MCF 10A (cell line): ENCODE measurements at regions of chr11 and their contacts with region 1.

Region 1: DNA sequence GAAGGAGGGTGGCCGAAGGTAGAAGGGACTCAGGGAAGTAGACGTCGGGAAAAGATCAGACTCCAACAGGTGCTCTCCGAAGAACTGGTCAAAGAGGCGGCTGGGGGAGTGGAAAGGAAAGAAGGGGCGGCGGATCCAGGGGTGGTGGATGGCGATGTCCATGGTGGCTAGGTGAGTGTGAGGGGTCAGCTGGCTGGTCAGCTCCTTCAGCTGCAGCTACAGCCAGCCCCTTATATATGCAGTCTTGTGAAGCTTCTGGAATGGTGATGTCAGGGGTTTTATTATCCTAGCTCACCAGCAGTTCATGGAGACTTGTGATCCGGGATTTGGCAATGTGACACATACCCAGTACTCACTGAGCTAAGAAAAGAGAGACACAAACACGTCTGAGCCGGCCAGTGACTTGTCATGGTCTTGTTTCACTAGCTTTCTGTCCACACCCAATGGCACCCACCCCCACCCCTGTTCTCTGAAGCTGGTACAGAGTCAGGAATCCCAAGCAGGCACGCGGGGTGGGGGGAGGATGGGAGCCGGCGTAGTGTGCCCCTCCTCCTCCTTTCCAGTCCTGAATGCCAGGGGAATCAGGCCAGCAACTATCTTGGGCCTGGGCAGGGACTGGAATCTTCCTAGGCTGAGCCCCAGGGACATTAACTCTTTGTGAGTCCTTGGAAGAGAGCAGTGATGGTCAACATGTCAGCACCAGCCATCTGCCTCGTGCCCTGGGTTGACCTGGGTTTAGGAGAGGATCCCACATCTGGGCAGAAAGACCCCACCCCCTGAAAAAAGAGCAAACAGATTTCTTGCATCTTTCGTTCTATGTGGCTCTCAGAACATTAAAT is at the start of gene CRYAB:
- DNase-seq: peak; percentile 61
- H3K4me3 Mint-ChIP-seq: peak within 1 kb of the TSS; percentile 41
- H3K27ac Mint-ChIP-seq: peak within 1 kb of the TSS; percentile 86
- H3K4me1 Mint-ChIP-seq: peaks cover 18% of the 10 kb centered on the region
- H3K27me3 Mint-ChIP-seq: no peaks in the 10 kb centered on the region
- CTCF ChIP-seq: no peak
- total RNA-seq, gene CRYAB: 1.2 and 2.5 TPM in 2 replicates

Region 2: GRCh38 chr11:111886844-111887243 is 24.9 kb before region 1 on chr11:
- CTCF ChIA-PET with region 1: interaction called, 6 read pairs
- POLR2A ChIA-PET with region 1: interaction called, 41 read pairs
- intact Hi-C with region 1: no loop called
- DNase-seq: no peak
- H3K4me3 Mint-ChIP-seq: no peak overlapping the region
- H3K27ac Mint-ChIP-seq: no peak overlapping the region
- H3K4me1 Mint-ChIP-seq: no peaks in the 10 kb centered on the region
- H3K27me3 Mint-ChIP-seq: no peaks in the 10 kb centered on the region
- CTCF ChIP-seq: no peak

Region 3: DNA sequence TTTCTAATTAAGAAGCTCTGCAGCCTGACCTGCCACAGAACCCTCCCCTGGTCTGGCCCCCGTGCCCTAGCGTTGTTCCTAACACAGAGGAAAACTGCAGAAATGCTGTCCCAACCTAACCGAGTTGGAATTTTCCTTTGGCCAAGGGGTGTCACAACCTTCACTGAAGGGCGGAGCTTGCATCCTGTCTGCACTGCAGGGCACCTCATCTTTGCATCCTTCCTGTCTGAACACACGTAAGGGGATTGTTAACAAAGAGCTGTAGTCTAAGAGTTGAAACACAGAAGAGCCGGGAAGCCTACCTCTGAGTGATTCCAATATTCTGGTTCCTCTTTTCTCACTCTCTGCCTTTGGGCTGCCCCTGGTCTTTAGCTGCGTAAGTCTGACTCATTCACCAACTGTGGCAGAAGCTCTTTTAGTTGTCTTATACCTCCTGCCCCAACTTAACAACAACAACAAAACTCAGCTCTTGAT is 26.9 kb after region 1 on chr11:
- CTCF ChIA-PET with region 1: interaction called, 3 read pairs
- POLR2A ChIA-PET with region 1: interaction called, 10 read pairs
- intact Hi-C with region 1: no loop called
- DNase-seq: peak; percentile 67
- H3K4me3 Mint-ChIP-seq: peak overlapping the region; percentile 71
- H3K27ac Mint-ChIP-seq: peak overlapping the region; percentile 8
- H3K4me1 Mint-ChIP-seq: peaks cover 60% of the 10 kb centered on the region
- H3K27me3 Mint-ChIP-seq: no peaks in the 10 kb centered on the region
- CTCF ChIP-seq: no peak

Region 4: GRCh38 chr11:111967649-111968048 is 55.9 kb after region 1 on chr11:
- CTCF ChIA-PET with region 1: no interaction called
- POLR2A ChIA-PET with region 1: no interaction called
- intact Hi-C with region 1: no loop called
- DNase-seq: no peak
- H3K4me3 Mint-ChIP-seq: no peak overlapping the region
- H3K27ac Mint-ChIP-seq: no peak overlapping the region
- H3K4me1 Mint-ChIP-seq: peaks cover 5% of the 10 kb centered on the region
- H3K27me3 Mint-ChIP-seq: no peaks in the 10 kb centered on the region
- CTCF ChIP-seq: no peak